PC-3 (cell line): ENCODE measurements at regions of chr10 and their contacts with region 1.

Region 1: DNA sequence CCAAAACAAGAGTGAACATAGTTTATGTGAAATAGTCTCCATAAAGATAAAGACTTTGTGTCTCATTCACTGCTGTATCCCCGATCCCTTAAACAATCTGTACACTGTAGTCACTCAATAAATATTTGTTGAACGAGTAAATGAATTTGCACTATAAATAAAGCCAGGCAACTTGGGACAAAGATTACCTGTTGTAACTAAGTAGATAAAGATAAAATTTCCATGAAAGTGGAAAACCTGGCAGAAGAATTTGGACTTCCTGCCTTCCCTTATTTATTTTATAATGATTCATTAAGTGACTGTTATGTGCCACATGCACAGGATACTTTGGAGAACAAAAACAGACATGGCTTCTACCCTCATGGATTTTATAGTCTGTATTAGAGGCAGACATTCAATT is 277.7 kb upstream of the KAT6B start:
- DNase-seq: peak; percentile 100
- ATAC-seq: peak; percentile 97
- H3K4me3 ChIP-seq: peak overlapping the region; percentile 4; the same call in 1 of the 2 replicates
- H3K27ac ChIP-seq: peak overlapping the region; percentile 66
- H3K4me1 ChIP-seq: peaks cover 21% of the 10 kb centered on the region
- H3K27me3 ChIP-seq: no peaks in the 10 kb centered on the region
- CTCF ChIP-seq: no peak

Region 2: DNA sequence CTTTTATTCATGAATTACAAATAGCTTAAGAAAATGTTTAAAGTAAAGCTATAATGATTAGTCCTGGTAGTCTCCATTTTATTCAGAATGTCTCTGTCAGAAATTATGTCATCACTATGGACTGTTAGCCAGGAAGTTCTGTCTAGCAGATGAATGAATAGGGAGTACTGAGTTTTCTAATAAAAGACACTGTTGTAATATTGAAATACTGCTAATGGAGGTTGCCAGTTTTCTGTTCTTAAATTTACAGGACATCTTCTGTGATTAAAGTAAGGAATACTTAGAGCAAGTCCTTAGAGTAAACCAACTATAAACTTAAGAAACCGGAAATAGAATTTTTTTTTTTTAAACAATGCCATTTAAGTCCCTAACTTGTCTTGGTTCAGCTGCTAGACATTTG is 87.9 kb before region 1 on chr10:
- CTCF ChIA-PET with region 1: no interaction called
- POLR2A ChIA-PET with region 1: no interaction called
- intact Hi-C with region 1: loop called (anchors 1 kb)
- DNase-seq: no peak
- ATAC-seq: peak; percentile 66
- H3K4me3 ChIP-seq: no peak overlapping the region
- H3K27ac ChIP-seq: no peak overlapping the region
- H3K4me1 ChIP-seq: no peaks in the 10 kb centered on the region
- H3K27me3 ChIP-seq: no peaks in the 10 kb centered on the region
- CTCF ChIP-seq: no peak

Region 3: GRCh38 chr10:74598891-74599566 is 50.4 kb after region 1 on chr10:
- CTCF ChIA-PET with region 1: no interaction called
- POLR2A ChIA-PET with region 1: no interaction called
- intact Hi-C with region 1: loop called (anchors 2 kb)
- DNase-seq: peak; percentile 74
- ATAC-seq: peak; percentile 89
- H3K4me3 ChIP-seq: no peak overlapping the region
- H3K27ac ChIP-seq: no peak overlapping the region
- H3K4me1 ChIP-seq: peaks cover 12% of the 10 kb centered on the region
- H3K27me3 ChIP-seq: no peaks in the 10 kb centered on the region
- CTCF ChIP-seq: no peak

Region 4: GRCh38 chr10:74677951-74678350 is 129.3 kb after region 1 on chr10:
- CTCF ChIA-PET with region 1: no interaction called
- POLR2A ChIA-PET with region 1: no interaction called
- intact Hi-C with region 1: no loop called
- DNase-seq: no peak
- ATAC-seq: no peak
- H3K4me3 ChIP-seq: no peak overlapping the region
- H3K27ac ChIP-seq: no peak overlapping the region
- H3K4me1 ChIP-seq: no peaks in the 10 kb centered on the region
- H3K27me3 ChIP-seq: no peaks in the 10 kb centered on the region
- CTCF ChIP-seq: no peak

Region 5: DNA sequence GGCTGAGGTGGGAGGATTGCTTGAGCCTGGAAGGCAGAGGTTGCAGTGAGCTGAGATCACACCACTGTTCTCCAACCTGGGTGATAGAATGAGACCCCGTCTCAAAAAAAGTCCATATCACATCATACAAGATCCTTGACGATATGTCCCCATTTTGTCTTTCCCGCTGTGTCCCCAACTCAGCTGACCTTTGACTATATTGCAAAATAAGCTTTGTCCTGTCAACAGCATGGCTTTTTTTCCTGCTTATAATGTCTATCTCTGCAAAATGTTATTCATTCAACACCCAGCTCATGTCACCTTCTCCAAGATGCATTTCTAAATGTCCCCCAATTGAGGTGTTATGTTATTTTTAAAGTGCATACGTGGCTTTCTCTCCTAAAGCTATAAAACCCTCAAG is 141.7 kb after region 1 on chr10:
- CTCF ChIA-PET with region 1: no interaction called
- POLR2A ChIA-PET with region 1: interaction called, 17 read pairs
- intact Hi-C with region 1: no loop called
- DNase-seq: no peak
- ATAC-seq: no peak
- H3K4me3 ChIP-seq: no peak overlapping the region
- H3K27ac ChIP-seq: no peak overlapping the region
- H3K4me1 ChIP-seq: no peaks in the 10 kb centered on the region
- H3K27me3 ChIP-seq: no peaks in the 10 kb centered on the region
- CTCF ChIP-seq: no peak

Region 6: GRCh38 chr10:74743389-74743788 is 194.7 kb after region 1 on chr10:
- CTCF ChIA-PET with region 1: no interaction called
- POLR2A ChIA-PET with region 1: no interaction called
- intact Hi-C with region 1: no loop called
- DNase-seq: peak; percentile 77
- ATAC-seq: peak; percentile 81
- H3K4me3 ChIP-seq: no peak overlapping the region
- H3K27ac ChIP-seq: no peak overlapping the region
- H3K4me1 ChIP-seq: peaks cover 10% of the 10 kb centered on the region
- H3K27me3 ChIP-seq: no peaks in the 10 kb centered on the region
- CTCF ChIP-seq: peak; percentile 40; the same call in 1 of the 2 replicates

Region 7: DNA sequence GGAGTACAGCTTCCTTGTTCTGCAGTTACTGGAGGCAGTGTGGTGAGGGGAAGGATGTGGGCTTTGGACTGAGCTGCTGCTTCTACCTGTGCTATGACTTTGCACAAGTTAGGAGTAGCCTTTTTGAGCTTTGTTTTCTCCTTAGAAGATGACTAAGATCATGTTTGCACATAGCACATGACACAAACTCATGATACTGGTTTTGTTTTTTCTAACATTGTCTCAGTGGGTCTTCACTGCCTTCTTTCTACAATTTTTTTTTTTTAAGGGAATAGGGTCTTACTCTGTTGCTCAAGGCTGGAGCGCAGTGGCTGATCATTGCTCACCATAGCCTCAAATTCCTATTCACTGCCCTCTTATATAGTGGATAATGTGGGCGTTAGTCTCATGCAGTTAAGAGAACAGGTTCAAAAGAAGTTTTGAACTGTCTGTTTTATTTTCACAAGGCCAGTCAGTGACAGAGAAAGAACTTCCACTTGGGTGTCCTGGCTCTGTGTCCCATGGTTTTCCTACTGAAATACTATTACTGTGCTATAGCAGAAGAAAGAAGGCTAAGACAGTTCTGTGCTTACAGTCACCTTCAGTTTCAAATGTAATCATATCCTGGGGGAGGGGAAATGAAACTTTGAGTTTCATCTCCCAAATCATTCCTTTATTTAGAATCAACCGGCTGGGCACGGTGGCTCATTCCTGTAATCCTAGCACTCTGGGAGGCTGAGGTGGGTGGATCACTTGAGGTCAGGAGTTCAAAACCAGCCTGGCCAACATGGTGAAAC is 349.7 kb after region 1 on chr10:
- CTCF ChIA-PET with region 1: no interaction called
- POLR2A ChIA-PET with region 1: no interaction called
- intact Hi-C with region 1: no loop called
- DNase-seq: peak; percentile 96
- ATAC-seq: peak; percentile 89
- H3K4me3 ChIP-seq: no peak overlapping the region
- H3K27ac ChIP-seq: peak overlapping the region; percentile 51
- H3K4me1 ChIP-seq: peaks cover 24% of the 10 kb centered on the region
- H3K27me3 ChIP-seq: no peaks in the 10 kb centered on the region
- CTCF ChIP-seq: no peak

Region 8: DNA sequence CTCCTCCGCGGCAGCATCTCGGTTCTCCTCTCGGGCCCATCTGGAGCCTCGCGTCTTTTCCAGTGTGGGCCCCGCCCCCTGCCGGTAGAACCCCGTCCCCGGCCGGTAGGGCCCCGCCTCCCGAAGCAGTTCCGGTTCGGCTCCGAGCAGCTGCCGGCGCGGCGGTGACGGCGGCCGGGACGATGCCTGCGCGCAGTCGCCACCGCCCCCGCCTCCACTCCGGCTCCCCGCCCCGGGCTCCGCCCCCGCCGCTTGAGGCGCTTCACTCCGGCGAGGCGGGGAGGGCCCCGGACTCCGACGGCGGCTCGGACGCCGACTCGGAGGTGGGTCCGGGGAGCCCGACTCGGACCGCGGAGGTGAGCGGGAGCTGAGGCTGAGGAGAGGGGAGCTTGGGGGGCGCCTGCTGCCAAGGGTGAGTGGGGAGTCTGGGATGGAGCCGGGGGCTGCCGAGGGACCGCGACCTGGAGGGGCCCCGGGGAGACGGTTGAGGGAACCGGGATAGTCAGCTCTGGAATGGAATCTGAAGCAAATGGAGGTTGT is 562.8 kb after region 1 on chr10 and contains the start of gene SAMD8:
- CTCF ChIA-PET with region 1: no interaction called
- POLR2A ChIA-PET with region 1: no interaction called
- intact Hi-C with region 1: loop called (anchors 2 kb)
- DNase-seq: peak; percentile 100
- ATAC-seq: peak; percentile 84
- H3K4me3 ChIP-seq: peak within 1 kb of the TSS; percentile 74
- H3K27ac ChIP-seq: peak within 1 kb of the TSS; percentile 64
- H3K4me1 ChIP-seq: peaks cover 25% of the 10 kb centered on the region
- H3K27me3 ChIP-seq: no peaks in the 10 kb centered on the region
- CTCF ChIP-seq: peak; percentile 50
- total RNA-seq, gene SAMD8: 47.4 and 48.6 TPM in 2 replicates